ENCODE measurements at regions of chr11 and their contacts with region 1.

Region 1: DNA sequence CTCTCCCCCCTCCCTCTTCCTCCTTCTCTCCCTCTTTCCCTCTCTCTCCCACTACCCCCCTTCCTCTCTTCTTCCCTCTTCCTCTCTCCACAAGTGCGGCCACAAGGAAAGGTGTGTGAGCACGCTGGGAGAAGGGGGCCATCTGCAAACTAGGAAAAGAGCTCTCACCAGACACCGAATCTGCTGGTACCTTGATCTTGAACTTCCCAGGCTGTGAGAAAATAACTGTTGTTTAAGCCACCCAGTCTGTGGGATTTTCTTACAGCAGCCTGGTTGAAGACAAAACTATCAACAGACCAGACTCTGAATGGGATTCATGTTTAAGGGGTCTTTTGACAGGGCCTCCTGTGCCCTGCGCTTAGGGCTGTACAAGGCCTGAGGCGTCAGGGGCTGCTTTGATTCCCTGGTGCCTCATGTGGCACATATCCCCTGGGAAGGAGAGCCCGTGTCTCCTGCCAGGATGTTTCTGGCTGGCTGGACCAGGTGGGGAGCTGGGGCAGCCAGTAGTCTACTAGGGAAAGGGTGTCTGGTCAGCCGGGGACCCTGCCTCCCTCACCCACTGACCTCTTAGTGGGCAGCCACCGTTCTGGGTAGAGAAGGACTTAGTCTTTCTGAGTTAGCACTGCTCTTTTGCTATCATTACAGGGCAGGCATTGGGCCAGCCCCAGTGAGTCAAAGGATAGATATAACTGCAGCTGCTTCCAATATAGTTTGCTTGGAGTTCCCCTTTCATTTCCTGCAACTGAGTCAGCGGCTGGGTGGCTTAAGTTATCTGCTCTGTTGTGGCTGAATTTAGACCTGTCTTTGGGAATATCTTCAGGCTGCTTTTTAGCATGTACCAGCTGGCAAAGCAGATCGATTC is 6.2 kb downstream of the PANX1 start:
- DNase-seq: no peak
- H3K4me3 Mint-ChIP-seq: no peak overlapping the region
- H3K27ac Mint-ChIP-seq: peak overlapping the region; percentile 67
- H3K4me1 Mint-ChIP-seq: peaks cover 36% of the 10 kb centered on the region
- H3K27me3 Mint-ChIP-seq: no peaks in the 10 kb centered on the region

Region 2: DNA sequence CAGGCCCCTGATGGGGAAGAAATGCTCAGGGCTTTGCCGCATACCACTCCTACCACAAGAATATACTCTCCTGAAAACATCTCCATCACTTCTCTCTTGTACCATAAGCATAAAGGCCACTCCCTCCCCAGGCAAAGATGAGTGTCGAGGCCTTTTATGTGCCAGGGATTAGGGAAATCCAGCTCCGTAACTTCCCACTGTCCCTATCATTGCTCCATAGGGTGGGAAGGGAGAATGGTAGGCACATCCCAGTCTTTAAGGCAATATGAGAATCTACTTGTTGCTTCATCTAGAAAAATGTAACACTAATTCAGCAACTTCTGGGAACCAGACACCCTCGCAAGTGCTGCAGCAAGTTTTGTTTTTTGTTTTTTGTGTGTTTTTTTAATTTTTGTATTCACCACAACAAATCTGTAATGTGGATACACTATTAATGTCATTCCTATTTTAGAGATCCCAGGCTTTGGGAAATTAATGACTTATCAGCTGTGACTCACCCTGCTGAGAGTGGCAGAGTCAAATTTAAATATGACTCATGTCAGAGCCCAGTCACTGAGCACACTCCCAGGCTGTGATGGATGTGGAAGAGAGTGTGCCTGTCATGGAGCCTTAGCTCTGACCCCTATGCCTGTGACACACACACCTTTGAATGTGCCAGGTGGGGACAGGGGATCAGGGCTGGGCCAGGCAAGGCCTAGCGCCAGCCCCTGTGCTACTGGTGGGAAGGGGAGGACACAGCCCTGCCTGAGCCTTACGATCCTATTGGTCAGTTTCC is 17.2 kb after region 1 on chr11:
- intact Hi-C with region 1: loop called (anchors 1 kb)
- DNase-seq: no peak
- H3K4me3 Mint-ChIP-seq: no peak overlapping the region
- H3K27ac Mint-ChIP-seq: peak overlapping the region; percentile 71
- H3K4me1 Mint-ChIP-seq: peaks cover 57% of the 10 kb centered on the region
- H3K27me3 Mint-ChIP-seq: no peaks in the 10 kb centered on the region

Region 3: DNA sequence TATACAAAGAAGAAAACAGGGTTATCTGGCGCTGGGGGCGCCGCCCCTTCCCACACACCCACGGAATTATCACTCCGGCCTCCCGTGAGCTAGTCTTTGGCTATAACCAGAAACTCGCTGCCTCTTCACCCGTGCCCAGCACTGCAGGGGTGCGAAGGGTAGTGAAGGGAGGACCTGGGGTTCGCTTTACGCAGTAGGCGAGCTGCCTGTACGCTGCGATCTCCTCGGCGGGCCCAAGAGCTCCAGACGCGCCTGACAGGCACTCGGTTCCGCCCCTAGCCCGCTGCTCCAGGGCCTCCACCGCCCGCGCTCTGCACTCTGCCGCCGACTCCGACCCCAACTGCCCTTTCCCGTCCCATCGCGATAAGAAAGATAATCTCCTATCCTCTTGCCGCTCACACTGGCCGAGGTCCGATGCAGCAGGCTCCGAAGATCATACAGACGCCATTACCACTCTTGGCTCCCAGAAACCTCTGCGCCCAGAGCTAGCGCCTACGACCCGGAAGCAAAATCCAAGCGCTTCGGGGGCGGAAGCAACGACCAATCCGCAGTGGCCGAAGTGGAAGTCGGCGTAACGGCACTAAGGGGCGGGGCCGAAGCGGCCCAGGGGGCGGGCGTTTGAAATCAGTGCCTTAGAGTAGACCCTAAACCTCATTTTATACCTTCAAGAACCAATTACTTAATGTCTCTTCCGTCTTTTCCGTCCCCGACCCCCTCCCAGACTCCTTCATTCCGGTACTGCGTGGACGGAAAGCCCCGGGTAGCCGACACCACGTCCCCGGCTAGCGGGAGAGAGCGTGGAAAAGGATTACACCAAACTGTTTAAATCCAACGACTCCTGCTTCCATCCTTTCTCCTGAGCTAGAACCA is 838.5 kb after region 1 on chr11 and contains the starts of genes CWC15 and KDM4D:
- intact Hi-C with region 1: loop called (anchors 10 kb)
- DNase-seq: peak; percentile 91
- H3K4me3 Mint-ChIP-seq: peak within 1 kb of the TSS; percentile 95
- H3K27ac Mint-ChIP-seq: peak within 1 kb of the TSS; percentile 91
- H3K4me1 Mint-ChIP-seq: peaks cover 28% of the 10 kb centered on the region
- H3K27me3 Mint-ChIP-seq: no peaks in the 10 kb centered on the region
- total RNA-seq, gene CWC15: 86.1 and 94.4 TPM in 2 replicates
- total RNA-seq, gene KDM4D: 0.48 and 0.84 TPM in 2 replicates